ENCODE measurements at regions of chr11 and their contacts with region 1.

Region 1: DNA sequence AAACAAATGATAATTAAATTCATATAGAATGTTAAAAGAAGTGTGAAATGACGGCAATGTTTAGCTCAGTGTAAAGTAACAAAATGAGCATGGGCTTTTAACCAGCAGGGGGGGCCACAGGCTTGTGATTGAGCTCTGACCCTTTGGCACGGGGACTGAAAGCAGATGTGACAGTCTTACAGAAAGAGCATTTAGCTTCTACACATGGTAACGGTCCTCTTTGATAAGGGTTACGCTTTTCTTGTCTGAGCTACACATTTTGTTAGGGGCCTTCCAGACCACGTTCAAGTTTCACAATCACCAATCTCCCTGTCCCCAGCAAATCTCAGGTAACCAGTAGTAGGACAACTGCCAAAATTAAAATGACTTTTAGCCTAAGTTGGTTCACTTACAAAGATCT is 262.5 kb downstream of the DCDC1 start:
- DNase-seq: peak; percentile 44 to 82 (median 56)
- H3K4me3 ChIP-seq: no peak overlapping the region
- H3K27ac ChIP-seq: no peak overlapping the region
- H3K27me3 ChIP-seq: peaks cover 0 to 5% (median 0%) of the 10 kb centered on the region in 45 donors
- CTCF ChIP-seq: peak; percentile 44 to 89 (median 74)

Region 2: GRCh38 chr11:31870609-31871309 is 763.7 kb after region 1 on chr11:
- intact Hi-C with region 1: loop called in 1 of 2 experiments (anchors 5 kb)
- DNase-seq: peak in 4 of 10 donors; percentile 33 to 48 (median 46)
- H3K4me3 ChIP-seq: no peak overlapping the region
- H3K27ac ChIP-seq: no peak overlapping the region
- H3K27me3 ChIP-seq: peaks cover 0 to 23% (median 5%) of the 10 kb centered on the region in 45 donors
- CTCF ChIP-seq: peak in 53 of 56 donors; percentile 18 to 75 (median 51)

Region 3: DNA sequence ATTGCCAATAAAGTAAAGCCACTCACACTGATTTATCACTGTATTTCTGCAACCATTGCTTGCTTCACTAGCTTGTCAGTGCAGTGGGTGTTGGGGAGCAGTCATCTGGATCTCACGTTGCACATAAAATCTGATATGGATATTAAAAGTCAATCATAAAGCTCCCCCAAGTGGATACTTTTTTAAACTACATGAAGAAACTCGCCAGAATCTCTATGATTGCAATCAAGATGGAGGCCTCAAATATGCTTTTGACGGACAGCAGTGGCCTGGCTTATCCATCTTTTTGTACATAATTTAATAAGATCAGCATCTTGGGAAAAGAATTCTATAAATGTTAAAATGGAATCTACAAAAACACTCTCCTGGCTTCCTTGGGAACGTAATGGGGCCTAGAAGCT is 1190.5 kb after region 1 on chr11:
- intact Hi-C with region 1: loop called in 1 of 2 experiments (anchors 10 kb)
- DNase-seq: peak in 4 of 10 donors; percentile 7 to 49 (median 38)
- H3K4me3 ChIP-seq: no peak overlapping the region
- H3K27ac ChIP-seq: peak overlapping the region in 2 of 59 donors; percentile 1 to 47
- H3K27me3 ChIP-seq: no peaks in the 10 kb centered on the region
- CTCF ChIP-seq: peak; percentile 41 to 83 (median 62)